CD8-positive, alpha-beta memory T cell (primary cell): ENCODE measurements at regions of chr10 and their contacts with region 1.

Region 1: GRCh38 chr10:30359373-30360206 is 10.5 kb upstream of the MTPAP start:
- DNase-seq: peak; percentile 26 to 73 (median 41)
- H3K4me3 ChIP-seq: no peak overlapping the region
- H3K4me3 Mint-ChIP-seq: no peak overlapping the region
- H3K27ac ChIP-seq: no peak overlapping the region
- H3K27ac Mint-ChIP-seq: no peak overlapping the region
- H3K4me1 ChIP-seq: no peaks in the 10 kb centered on the region
- H3K4me1 Mint-ChIP-seq: peaks cover 0 to 3% (median 2%) of the 10 kb centered on the region in 3 donors
- H3K27me3 ChIP-seq: no peaks in the 10 kb centered on the region
- H3K27me3 Mint-ChIP-seq: peaks cover 6 to 29% of the 10 kb centered on the region in 2 donors

Region 2: DNA sequence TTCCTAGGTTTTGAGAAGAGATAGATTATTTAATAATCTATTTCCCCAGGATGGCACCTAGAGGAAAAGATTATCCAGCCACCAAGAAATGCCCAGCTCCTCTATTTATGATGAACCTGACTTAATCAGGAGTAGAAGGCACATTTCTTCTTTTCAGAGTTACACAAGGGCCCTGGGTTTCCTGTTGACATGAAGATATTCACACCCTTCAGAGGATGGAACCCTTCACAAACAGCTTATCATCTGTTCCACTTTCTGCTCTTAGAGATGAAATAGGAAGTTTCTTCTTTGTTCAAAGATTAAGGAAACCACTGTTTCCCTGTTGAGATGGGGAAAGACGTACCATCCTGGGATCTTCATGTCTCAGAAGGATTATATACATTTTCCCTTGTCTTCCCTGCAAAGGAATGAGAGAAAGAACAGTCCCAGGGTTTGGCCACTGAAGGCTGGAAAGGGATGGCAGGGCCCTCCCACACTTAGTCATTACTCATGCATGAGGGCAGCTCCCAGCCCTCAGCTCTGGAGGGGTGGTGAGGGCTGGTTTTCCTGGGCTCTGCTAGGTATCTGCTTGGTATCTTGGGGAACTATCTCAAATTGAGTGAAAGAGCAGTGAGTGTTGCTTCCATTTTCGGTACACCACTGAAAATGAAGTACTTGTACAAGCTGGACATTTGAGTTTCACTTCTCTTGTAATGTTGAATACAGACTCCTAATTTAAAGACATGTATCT is 74.6 kb before region 1 on chr10:
- CTCF ChIA-PET with region 1: no interaction called
- POLR2A ChIA-PET with region 1: no interaction called
- DNase-seq: no peak
- H3K4me3 ChIP-seq: no peak overlapping the region
- H3K4me3 Mint-ChIP-seq: peak overlapping the region in 1 of 7 donors; percentile 58
- H3K27ac ChIP-seq: no peak overlapping the region
- H3K27ac Mint-ChIP-seq: peak overlapping the region in 4 of 8 donors; percentile 9 to 76 (median 42)
- H3K4me1 ChIP-seq: no peaks in the 10 kb centered on the region
- H3K4me1 Mint-ChIP-seq: peaks cover 14 to 18% (median 15%) of the 10 kb centered on the region in 3 donors
- H3K27me3 ChIP-seq: no peaks in the 10 kb centered on the region
- H3K27me3 Mint-ChIP-seq: peaks cover 0 to 5% of the 10 kb centered on the region in 2 donors

Region 3: GRCh38 chr10:30348378-30348776 is 11.2 kb before region 1 on chr10:
- CTCF ChIA-PET with region 1: interaction called, 13 read pairs
- POLR2A ChIA-PET with region 1: no interaction called
- DNase-seq: no peak
- H3K4me3 ChIP-seq: peak overlapping the region; percentile 81
- H3K4me3 Mint-ChIP-seq: peak overlapping the region; percentile 92 to 99 (median 98)
- H3K27ac ChIP-seq: peak overlapping the region; percentile 72
- H3K27ac Mint-ChIP-seq: peak overlapping the region; percentile 84 to 100 (median 94)
- H3K4me1 ChIP-seq: peaks cover 41% of the 10 kb centered on the region
- H3K4me1 Mint-ChIP-seq: peaks cover 49 to 59% (median 59%) of the 10 kb centered on the region in 3 donors
- H3K27me3 ChIP-seq: no peaks in the 10 kb centered on the region
- H3K27me3 Mint-ChIP-seq: peaks cover under 1 to 1% of the 10 kb centered on the region in 2 donors